Prostate gland (tissue), 2 donors: ENCODE measurements at regions of chr17 and their contacts with region 1.

Region 1: GRCh38 chr17:61399131-61400057 is at the start of gene TBX2:
- DNase-seq: no peak
- H3K4me3 ChIP-seq: peak within 1 kb of the TSS; percentile 45 to 56
- H3K27ac ChIP-seq: peak within 1 kb of the TSS; percentile 79 to 84
- H3K4me1 ChIP-seq: peaks cover 12% of the 10 kb centered on the region
- H3K27me3 ChIP-seq: peaks cover 10% of the 10 kb centered on the region
- CTCF ChIP-seq: no peak
- POLR2A ChIP-seq: no peak
- total RNA-seq, gene TBX2: 9.2 to 34.1 TPM

Region 2: GRCh38 chr17:60745544-60745943 is 653.9 kb before region 1 on chr17:
- intact Hi-C with region 1: loop called (anchors 5 kb)
- DNase-seq: no peak
- H3K4me3 ChIP-seq: no peak overlapping the region
- H3K27ac ChIP-seq: no peak overlapping the region
- H3K4me1 ChIP-seq: no peaks in the 10 kb centered on the region
- H3K27me3 ChIP-seq: no peaks in the 10 kb centered on the region
- CTCF ChIP-seq: peak in 1 of 4 experiments; percentile 20
- POLR2A ChIP-seq: no peak

Region 3: DNA sequence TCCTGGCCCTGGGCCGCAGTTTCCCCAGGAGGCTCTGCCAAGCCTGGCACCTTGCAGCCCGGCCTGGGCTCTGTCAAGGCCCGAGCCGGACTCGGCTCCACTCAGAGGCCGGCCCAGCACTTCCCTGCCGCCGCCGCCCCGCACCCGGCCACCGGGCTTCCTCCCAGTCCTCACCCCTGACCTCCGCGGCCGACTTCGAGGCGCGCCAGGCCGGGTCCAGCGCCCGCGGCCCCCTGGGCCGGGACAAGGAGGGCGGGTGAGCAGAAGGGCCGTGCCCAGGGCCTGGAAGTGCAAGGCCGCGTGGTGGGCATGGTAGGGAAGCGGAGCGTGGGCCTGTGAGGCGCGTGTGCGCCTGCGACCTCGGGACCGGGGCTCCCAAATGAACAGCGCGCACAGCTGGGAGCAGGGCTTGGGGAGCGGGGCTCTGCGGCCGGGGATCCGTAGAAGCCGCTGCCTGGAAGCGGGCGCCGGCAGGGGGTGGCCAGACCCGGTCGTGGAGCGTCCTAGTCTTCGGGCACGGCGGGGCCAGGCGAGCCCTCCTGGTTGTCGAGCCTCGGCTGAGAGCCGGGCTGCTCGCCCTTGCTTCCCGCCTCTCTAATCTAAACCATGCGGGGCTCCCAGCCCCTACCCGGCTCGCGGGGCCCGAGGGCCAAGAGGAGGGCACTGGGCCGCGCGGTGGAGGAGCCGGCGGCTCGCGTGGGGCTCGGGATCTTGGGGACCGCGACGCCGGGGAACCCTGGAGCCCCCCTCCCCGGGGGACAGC is 52.3 kb after region 1 on chr17:
- intact Hi-C with region 1: loop called (anchors 5 kb)
- DNase-seq: no peak
- H3K4me3 ChIP-seq: peak overlapping the region; percentile 11 to 34
- H3K27ac ChIP-seq: peak overlapping the region in 1 of 2 donors; percentile 64
- H3K4me1 ChIP-seq: no peaks in the 10 kb centered on the region
- H3K27me3 ChIP-seq: peaks cover 27% of the 10 kb centered on the region
- CTCF ChIP-seq: no peak
- POLR2A ChIP-seq: no peak